ENCODE measurements at regions of chr22 and their contacts with region 1.

Region 1: GRCh38 chr22:32985899-32986765 is 72.0 kb downstream of the SYN3 start:
- DNase-seq: peak in 2 of 3 donors; percentile 42 to 81
- ATAC-seq: peak; percentile 96
- H3K4me3 ChIP-seq: no peak overlapping the region
- H3K4me1 ChIP-seq: peaks cover 3% of the 10 kb centered on the region
- CTCF ChIP-seq: peak; percentile 59

Region 2: GRCh38 chr22:32528984-32529982 is 456.8 kb before region 1 on chr22:
- intact Hi-C with region 1: loop called in 1 of 2 experiments (anchors 10 kb)
- DNase-seq: peak; percentile 82 to 91 (median 82)
- ATAC-seq: peak; percentile 84
- H3K4me3 ChIP-seq: no peak overlapping the region
- H3K4me1 ChIP-seq: peaks cover 14% of the 10 kb centered on the region
- CTCF ChIP-seq: peak; percentile 61

Region 3: DNA sequence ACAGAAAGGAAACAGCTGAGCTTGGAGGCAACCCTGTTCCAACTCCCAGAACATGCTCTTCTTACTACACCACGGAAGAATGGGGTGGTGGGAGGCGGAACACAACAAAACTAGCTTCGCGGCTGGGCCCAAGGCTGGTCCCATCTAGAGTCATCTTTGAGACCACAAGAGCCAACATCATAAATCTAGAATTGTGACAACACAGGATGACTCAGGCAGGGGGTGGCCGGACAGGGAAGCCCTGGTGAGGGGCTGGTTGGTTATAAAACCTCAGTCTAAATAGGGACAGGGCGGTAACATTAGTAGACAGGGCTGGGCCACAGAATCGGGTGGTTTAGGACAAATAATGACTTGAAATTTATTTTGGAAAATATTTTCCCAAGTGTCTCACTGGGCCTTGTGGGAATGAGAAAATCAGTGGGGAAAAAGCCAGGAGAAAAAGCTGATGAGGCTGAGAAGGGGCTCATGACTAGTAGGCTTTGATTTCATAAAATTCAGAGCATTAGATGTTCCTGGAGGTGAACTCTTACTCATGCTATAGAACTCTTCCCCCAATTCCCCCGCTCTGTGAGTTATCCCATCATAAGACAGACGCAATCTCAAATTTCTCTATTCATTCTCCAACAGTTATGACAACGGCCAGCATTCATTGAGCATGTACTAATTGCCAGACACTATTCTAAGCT is 336.5 kb before region 1 on chr22:
- intact Hi-C with region 1: loop called in 1 of 2 experiments (anchors 10 kb)
- DNase-seq: no peak
- ATAC-seq: peak; percentile 60
- H3K4me3 ChIP-seq: no peak overlapping the region
- H3K4me1 ChIP-seq: no peaks in the 10 kb centered on the region
- CTCF ChIP-seq: no peak

Region 4: DNA sequence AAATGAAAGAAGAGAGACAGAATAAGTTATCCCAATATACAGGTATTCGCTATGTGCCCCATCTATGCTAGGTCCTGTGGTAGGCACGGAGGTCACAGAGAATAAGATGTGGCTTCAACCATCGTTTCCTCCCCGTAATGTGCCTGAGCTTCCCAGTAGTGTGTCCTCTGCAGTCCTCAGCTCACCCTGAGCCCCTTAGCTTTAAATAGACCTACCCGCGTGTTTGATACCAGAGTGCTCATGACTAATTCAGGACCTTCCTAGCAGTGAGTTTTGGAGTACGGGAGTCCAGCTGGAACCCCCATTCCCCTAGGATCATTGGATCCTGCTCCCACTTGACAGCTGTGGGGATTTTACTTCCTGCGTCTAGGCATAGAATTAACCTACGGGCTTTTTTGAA is 109.5 kb after region 1 on chr22:
- intact Hi-C with region 1: no loop called
- DNase-seq: no peak
- ATAC-seq: no peak
- H3K4me3 ChIP-seq: no peak overlapping the region
- H3K4me1 ChIP-seq: no peaks in the 10 kb centered on the region
- CTCF ChIP-seq: no peak

Region 5: GRCh38 chr22:33167998-33168790 is 182.1 kb after region 1 on chr22:
- intact Hi-C with region 1: no loop called
- DNase-seq: no peak
- ATAC-seq: no peak
- H3K4me3 ChIP-seq: no peak overlapping the region
- H3K4me1 ChIP-seq: no peaks in the 10 kb centered on the region
- CTCF ChIP-seq: no peak